ENCODE measurements at regions of chr1 and their contacts with region 1.

Region 1: GRCh38 chr1:162612606-162613400 is 19.5 kb upstream of the DDR2 start:
- DNase-seq: no peak
- ATAC-seq: peak; percentile 85

Region 2: DNA sequence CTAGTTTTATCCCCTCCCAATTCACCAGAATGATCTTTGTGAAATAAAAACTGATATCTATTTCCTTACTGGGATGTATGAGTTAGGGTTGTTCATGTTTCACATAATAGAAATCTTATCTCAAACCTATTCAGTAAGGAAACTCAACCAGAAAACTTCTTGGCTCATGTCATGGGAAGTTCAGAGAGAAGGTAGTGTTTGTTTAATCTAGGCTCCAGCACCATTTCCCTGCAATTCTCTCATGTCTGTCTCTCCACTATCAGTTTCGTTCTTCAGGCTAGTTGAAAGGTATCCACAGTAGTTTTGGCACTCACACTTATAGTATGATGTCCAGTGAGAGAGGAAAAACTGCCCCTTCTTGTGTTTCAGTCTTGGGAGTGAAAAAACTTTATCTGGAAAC is 149.8 kb before region 1 on chr1:
- intact Hi-C with region 1: no loop called
- DNase-seq: no peak
- ATAC-seq: no peak

Region 3: DNA sequence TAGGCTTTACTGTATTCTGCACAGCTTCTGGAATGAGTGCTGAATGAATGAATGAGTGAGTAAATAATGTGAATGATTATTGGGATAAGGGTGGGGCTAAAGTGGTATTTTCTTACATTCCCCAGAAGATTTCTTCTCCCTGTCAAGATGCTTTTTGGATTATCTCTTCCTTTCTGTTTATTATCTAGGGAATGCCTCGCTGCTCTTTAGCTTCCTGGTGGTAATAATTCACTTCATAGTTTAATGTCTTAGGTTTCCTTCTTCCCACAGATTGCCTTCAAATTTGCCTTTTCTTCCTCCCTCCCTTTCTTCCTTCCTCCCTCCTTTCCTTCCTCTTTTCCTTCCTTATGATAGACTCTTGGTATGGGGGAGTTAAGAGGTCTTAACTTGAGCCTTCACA is 43.5 kb after region 1 on chr1:
- intact Hi-C with region 1: no loop called
- DNase-seq: no peak
- ATAC-seq: no peak

Region 4: DNA sequence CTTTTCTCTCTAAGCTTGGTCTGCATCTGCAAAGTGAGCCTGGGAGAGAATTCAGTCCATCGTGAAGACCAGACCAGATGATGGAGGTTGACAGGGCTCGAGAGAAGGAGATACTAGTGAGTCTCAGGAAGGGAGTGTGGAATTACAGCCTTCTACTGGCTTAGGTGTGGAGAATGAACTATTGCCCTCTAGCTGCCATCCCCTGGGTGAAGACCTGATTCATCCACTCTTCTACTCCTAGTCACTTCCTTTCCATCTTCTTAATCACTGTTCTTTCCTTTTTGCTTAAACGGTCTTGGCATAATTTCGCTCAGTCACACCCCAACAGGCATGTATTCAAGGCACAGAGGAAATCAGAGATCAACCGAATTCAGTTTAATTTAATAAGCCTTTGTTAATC is 143.7 kb after region 1 on chr1:
- intact Hi-C with region 1: loop called (anchors 5 kb)
- DNase-seq: no peak
- ATAC-seq: no peak

Measured in Right ventricle myocardium inferior (tissue), 1 donor.